ENCODE measurements at regions of chr3 and their contacts with region 1.

Region 1: GRCh38 chr3:127959846-127960245 is 44.8 kb downstream of the KBTBD12 start:
- DNase-seq: peak; percentile 44
- CTCF ChIP-seq: peak; percentile 70

Region 2: DNA sequence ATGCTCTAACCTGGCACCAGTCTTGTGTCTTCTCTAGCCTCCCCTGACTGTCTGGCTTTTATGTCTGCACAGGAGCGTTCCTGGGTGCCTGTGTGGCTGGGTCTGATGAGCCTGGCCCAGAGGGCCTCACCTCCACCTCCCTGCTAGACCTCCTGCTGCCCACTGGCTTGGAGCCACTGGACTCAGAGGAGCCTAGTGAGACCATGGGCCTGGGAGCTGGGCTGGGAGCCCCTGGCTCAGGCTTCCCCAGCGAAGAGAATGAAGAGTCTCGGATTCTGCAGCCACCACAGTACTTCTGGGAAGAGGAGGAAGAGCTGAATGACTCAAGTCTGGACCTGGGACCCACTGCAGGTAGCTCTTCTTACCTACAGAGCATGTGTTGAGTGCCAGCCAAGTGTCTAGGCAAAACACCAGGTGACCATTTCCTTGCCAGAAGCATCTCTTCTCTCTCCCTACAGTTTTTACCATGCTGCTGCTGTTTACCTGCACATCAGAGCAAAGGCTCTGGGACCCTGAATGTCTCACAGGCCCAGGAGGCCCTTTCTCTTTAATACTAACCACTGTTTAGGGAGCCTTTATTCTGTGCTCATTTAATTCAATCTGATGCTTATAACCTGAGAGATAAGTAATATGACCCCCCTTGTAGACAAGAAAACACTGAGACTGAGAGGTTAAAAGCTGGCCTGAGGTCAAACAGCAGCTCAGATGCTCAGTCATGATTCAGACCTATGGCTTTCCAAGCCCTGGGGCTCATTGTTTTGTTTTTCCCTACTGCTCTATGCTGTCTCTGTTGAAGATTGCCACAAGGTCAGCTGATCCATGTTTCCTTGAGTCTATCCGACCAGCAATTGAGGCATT is 320.4 kb before region 1 on chr3:
- in situ Hi-C with region 1: loop called (anchors 10 kb)
- DNase-seq: no peak
- CTCF ChIP-seq: no peak

Region 3: GRCh38 chr3:127822698-127823425 is 137.0 kb before region 1 on chr3:
- in situ Hi-C with region 1: no loop called
- DNase-seq: peak; percentile 70
- CTCF ChIP-seq: peak; percentile 64

Measured in GM13976 (cell line).